ENCODE measurements at regions of chr9 and their contacts with region 1.

Region 1: GRCh38 chr9:105608721-105609598 is 51.0 kb downstream of the FKTN start:
- DNase-seq: no peak
- ATAC-seq: no peak
- H3K4me3 ChIP-seq: no peak overlapping the region
- H3K27ac ChIP-seq: no peak overlapping the region
- H3K4me1 ChIP-seq: no peaks in the 10 kb centered on the region
- H3K27me3 ChIP-seq: no peaks in the 10 kb centered on the region

Region 2: GRCh38 chr9:105681724-105682123 is 72.8 kb after region 1 on chr9:
- intact Hi-C with region 1: no loop called
- DNase-seq: no peak
- ATAC-seq: no peak
- H3K4me3 ChIP-seq: no peak overlapping the region
- H3K27ac ChIP-seq: no peak overlapping the region
- H3K4me1 ChIP-seq: no peaks in the 10 kb centered on the region
- H3K27me3 ChIP-seq: no peaks in the 10 kb centered on the region

Region 3: GRCh38 chr9:105881654-105882349 is 272.8 kb after region 1 on chr9:
- intact Hi-C with region 1: loop called in 2 of 4 experiments (anchors 2 to 10 kb)
- DNase-seq: peak; percentile 35 to 81 (median 69)
- ATAC-seq: no peak
- H3K4me3 ChIP-seq: no peak overlapping the region
- H3K27ac ChIP-seq: no peak overlapping the region
- H3K4me1 ChIP-seq: no peaks in the 10 kb centered on the region
- H3K27me3 ChIP-seq: no peaks in the 10 kb centered on the region